ENCODE measurements at regions of chr1 and their contacts with region 1.

Region 1: GRCh38 chr1:108512239-108512981 is 47.5 kb upstream of the EEIG2 start:
- DNase-seq: no peak
- H3K4me3 ChIP-seq: no peak overlapping the region
- H3K27ac ChIP-seq: no peak overlapping the region
- H3K4me1 ChIP-seq: no peaks in the 10 kb centered on the region
- H3K27me3 ChIP-seq: no peaks in the 10 kb centered on the region
- CTCF ChIP-seq: peak; percentile 38 to 89 (median 78)
- EP300 ChIP-seq: no peak
- POLR2A ChIP-seq: no peak

Region 2: GRCh38 chr1:108643492-108644335 is 131.3 kb after region 1 on chr1:
- intact Hi-C with region 1: loop called (anchors 5 to 10 kb)
- DNase-seq: peak in 2 of 5 donors; percentile 12 to 63
- H3K4me3 ChIP-seq: no peak overlapping the region
- H3K27ac ChIP-seq: no peak overlapping the region
- H3K4me1 ChIP-seq: no peaks in the 10 kb centered on the region
- H3K27me3 ChIP-seq: no peaks in the 10 kb centered on the region
- CTCF ChIP-seq: peak in 2 of 3 donors; percentile 53 to 63
- EP300 ChIP-seq: no peak
- POLR2A ChIP-seq: no peak

Region 3: GRCh38 chr1:108897865-108898720 is 385.7 kb after region 1 on chr1:
- intact Hi-C with region 1: loop called in 1 of 4 experiments (anchors 10 kb)
- DNase-seq: peak in 1 of 5 donors; percentile 45
- H3K4me3 ChIP-seq: no peak overlapping the region
- H3K27ac ChIP-seq: no peak overlapping the region
- H3K4me1 ChIP-seq: no peaks in the 10 kb centered on the region
- H3K27me3 ChIP-seq: no peaks in the 10 kb centered on the region
- CTCF ChIP-seq: peak; percentile 54 to 78 (median 71)
- EP300 ChIP-seq: no peak
- POLR2A ChIP-seq: no peak

Measured in ovary (tissue), 10 donors.